AG04449 (cell line): ENCODE measurements at regions of chr9 and their contacts with region 1.

Region 1: DNA sequence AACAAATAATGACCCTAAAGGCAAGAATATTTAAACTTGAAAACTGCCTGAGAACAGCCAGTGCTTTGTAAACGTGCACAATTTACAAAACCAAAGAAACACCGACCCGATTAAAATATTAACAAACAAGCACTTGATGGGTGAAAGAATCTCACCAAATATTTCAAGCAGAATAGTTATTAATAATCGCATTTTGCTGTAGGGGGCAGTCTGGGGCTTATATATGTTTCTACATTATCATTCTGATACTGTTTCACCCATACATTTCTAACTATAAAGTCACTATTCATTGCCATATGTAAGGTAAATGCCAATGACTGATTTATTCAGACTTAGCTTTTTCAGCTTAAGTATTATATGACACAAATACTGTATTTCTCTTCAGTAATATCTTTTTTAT is 37.7 kb downstream of the UBAP2 start:
- DNase-seq: no peak
- H3K4me3 ChIP-seq: no peak overlapping the region
- CTCF ChIP-seq: no peak

Region 2: DNA sequence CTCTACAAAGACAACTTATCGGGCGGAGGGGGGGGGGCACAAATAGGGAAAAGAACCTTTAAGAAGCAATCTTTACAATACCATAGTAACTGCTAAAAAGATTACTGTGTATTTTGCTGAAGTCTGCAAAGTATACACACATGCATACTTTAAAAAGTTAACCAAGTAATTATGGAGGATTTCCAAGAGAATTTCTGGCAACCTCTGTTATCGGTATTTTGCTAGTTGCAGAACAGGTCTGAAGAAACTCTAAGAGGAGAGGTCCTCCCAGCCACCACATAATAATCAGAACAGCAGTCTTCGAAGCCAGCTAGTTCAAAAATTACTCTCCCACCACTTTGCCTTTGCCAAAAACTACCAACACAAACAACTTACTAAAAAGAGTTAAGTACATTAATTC is 18.3 kb before region 1 on chr9:
- CTCF ChIA-PET with region 1: interaction called, 10 read pairs
- POLR2A ChIA-PET with region 1: no interaction called
- DNase-seq: no peak
- H3K4me3 ChIP-seq: no peak overlapping the region
- CTCF ChIP-seq: no peak